CD4-positive, alpha-beta memory T cell (primary cell): ENCODE measurements at regions of chr4 and their contacts with region 1.

Region 1: GRCh38 chr4:139642364-139642763 is 23.3 kb upstream of the MGST2 start:
- DNase-seq: no peak
- H3K4me3 ChIP-seq: no peak overlapping the region
- H3K4me3 Mint-ChIP-seq: no peak overlapping the region
- H3K27ac ChIP-seq: no peak overlapping the region
- H3K27ac Mint-ChIP-seq: no peak overlapping the region
- H3K4me1 ChIP-seq: no peaks in the 10 kb centered on the region
- H3K4me1 Mint-ChIP-seq: no peaks in the 10 kb centered on the region
- H3K27me3 ChIP-seq: no peaks in the 10 kb centered on the region
- H3K27me3 Mint-ChIP-seq: peaks cover 3% of the 10 kb centered on the region in 2 donors

Region 2: GRCh38 chr4:139656614-139657486 is 14.5 kb after region 1 on chr4:
- CTCF ChIA-PET with region 1: interaction called, 15 read pairs
- POLR2A ChIA-PET with region 1: no interaction called
- intact Hi-C with region 1: no loop called
- DNase-seq: peak; percentile 59 to 65 (median 62)
- H3K4me3 ChIP-seq: no peak overlapping the region
- H3K4me3 Mint-ChIP-seq: peak overlapping the region in 6 of 8 donors; percentile 23 to 75 (median 72)
- H3K27ac ChIP-seq: no peak overlapping the region
- H3K27ac Mint-ChIP-seq: peak overlapping the region in 6 of 7 donors; percentile 13 to 88 (median 68)
- H3K4me1 ChIP-seq: peaks cover 18% of the 10 kb centered on the region
- H3K4me1 Mint-ChIP-seq: peaks cover 15 to 26% (median 20%) of the 10 kb centered on the region in 4 donors
- H3K27me3 ChIP-seq: no peaks in the 10 kb centered on the region
- H3K27me3 Mint-ChIP-seq: peaks cover 0 to 2% of the 10 kb centered on the region in 2 donors